ENCODE measurements at regions of chr2 and their contacts with region 1.

Region 1: DNA sequence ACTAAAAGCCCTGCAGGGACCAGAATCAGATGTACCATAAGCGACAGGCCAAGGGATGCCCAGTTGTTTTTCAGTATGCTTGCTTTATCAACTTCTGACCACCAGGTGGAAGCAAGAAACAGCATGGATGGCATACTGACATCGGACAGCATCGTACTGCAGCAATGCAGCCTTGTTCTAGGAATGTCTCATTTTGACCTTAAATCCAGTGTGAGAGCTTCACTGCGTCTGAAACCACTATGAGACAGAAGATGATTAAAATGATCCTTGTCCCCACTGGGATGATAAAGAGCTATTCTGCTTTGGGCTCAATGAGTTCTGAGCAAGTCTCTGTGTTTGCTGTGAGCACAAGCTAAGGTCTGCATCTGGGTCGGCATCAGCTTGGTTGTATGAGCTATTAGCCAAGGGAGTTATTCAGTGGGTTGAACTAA is 54.3 kb downstream of the CDK15 start:
- DNase-seq: peak; percentile 56
- ATAC-seq: peak; percentile 99
- H3K4me3 ChIP-seq: no peak overlapping the region
- H3K27ac ChIP-seq: no peak overlapping the region
- H3K4me1 ChIP-seq: peaks cover 0 to 4% of the 10 kb centered on the region in 2 experiments; a peak in 1 of 4 replicates
- H3K27me3 ChIP-seq: no peaks in the 10 kb centered on the region
- CTCF ChIP-seq: peak; percentile 80 to 82 (median 81)
- POLR2A ChIP-seq: no peak
- RAD21 ChIP-seq: peak; percentile 95

Region 2: DNA sequence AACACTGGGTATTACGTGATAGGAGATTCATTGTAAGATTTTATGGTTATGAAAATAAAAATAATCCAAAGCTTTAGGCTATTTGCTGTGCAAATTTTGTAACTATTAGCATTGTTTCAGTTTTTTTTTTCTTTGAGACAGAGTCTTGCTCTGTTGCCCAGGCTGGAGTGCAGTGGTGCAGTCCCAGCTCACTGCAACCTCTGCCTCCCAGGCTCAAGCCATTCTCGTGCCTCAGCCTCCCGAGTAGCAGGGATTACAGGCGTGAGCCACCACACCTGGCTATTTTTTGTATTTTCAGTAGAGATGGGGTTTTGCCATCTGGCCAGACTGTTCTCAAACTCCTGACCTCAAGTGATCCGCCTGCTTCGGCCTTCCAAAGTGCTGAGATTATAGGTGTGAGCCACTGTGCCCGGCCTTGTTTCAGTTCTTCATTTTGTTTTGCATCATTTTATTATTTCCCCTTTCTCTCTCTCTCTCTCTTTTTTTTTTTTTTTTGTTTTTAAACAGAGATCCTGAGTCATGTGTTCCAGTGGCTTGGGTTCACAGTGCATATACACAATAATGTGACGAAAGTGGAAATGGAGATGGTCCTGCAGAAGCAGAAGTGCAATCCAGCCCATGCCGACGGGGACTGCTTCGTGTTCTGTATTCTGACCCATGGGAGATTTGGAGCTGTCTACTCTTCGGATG is 651.9 kb before region 1 on chr2:
- CTCF ChIA-PET with region 1: no interaction called
- POLR2A ChIA-PET with region 1: no interaction called
- RAD21 ChIA-PET with region 1: no interaction called
- intact Hi-C with region 1: no loop called
- DNase-seq: no peak
- ATAC-seq: no peak
- H3K4me3 ChIP-seq: no peak overlapping the region
- H3K27ac ChIP-seq: no peak overlapping the region
- H3K4me1 ChIP-seq: no peaks in the 10 kb centered on the region
- H3K27me3 ChIP-seq: no peaks in the 10 kb centered on the region
- CTCF ChIP-seq: no peak
- POLR2A ChIP-seq: no peak
- RAD21 ChIP-seq: no peak

Region 3: GRCh38 chr2:202056392-202057010 is 195.8 kb after region 1 on chr2:
- CTCF ChIA-PET with region 1: interaction called, 10 read pairs
- POLR2A ChIA-PET with region 1: no interaction called
- RAD21 ChIA-PET with region 1: interaction called in 1 of 2 experiments, 3 read pairs
- intact Hi-C with region 1: loop called (anchors 2 kb)
- DNase-seq: no peak
- ATAC-seq: peak; percentile 67; the same call in 1 of the 2 replicates
- H3K4me3 ChIP-seq: no peak overlapping the region
- H3K27ac ChIP-seq: no peak overlapping the region
- H3K4me1 ChIP-seq: no peaks in the 10 kb centered on the region
- H3K27me3 ChIP-seq: peaks cover 4% of the 10 kb centered on the region; the same call in 1 of the 2 replicates
- CTCF ChIP-seq: peak; percentile 35 to 48 (median 42); a peak in 4 of 6 replicates
- POLR2A ChIP-seq: no peak
- RAD21 ChIP-seq: peak; percentile 55